ENCODE measurements at regions of chr15 and their contacts with region 1.

Region 1: DNA sequence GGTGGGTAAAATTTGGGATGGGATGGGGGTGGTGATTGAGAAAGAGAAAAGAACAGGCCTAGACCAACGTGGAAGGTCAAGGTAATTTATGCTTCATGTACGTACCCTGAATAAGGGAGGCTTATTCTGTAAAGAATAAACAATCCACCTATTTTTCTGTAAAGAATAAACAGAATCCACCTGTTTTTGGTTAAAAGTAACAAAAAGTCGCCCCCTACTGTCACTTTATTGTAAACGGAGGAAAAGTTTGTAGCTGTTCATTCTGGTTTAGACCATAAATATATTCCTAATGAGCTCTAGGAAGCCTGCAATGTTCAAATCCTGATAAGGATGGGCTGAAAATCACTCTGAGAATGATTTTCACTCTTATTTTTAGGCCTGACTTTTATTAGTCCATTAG is 23.5 kb upstream of the SQOR start:
- DNase-seq: no peak
- ATAC-seq: peak; percentile 43; the same call in 1 of the 3 replicates
- H3K4me3 ChIP-seq: no peak overlapping the region
- H3K27ac ChIP-seq: no peak overlapping the region
- H3K4me1 ChIP-seq: no peaks in the 10 kb centered on the region; the same call in 1 of the 2 replicates
- H3K27me3 ChIP-seq: no peaks in the 10 kb centered on the region
- CTCF ChIP-seq: peak; percentile 42 to 53 (median 46); a peak in 5 of 6 replicates
- EP300 ChIP-seq: no peak
- POLR2A ChIP-seq: no peak
- RAD21 ChIP-seq: peak; percentile 61

Region 2: DNA sequence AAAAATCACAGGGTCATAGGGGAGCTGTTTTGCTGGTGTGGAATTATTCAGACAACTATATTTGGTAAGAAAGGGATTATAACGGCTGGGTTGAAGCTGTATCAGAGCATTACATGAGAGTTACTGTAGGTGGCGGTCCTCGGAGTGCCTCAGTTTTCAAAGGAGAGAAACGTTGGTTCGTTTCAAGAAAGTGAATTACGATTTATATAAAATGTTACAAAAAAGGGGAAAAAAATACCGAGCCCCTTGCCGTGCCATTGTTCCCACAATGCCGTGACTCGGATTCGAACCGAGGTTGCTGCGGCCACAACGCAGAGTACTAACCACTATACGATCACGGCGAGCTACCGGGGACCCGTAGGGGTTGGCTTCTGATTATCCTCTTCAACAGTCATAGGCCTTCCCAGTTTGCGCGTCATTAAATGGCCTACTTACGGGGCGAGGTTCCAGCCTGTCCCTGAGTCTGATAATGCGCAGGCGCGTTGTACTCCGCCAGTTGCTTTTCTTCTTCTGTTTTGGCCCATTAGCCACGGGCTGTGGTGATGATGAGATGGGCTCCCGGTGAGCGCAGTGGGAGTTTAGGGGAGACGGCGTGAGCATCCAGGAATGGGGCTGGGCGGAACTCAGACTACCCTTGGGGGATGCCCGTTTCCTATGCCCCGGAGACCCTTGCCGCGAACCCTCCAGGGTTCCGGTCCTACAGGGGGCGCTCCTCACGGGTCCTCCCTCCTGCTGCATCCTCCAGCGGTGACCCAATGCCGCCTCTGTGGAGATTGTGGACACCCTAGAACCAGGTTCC is 412.8 kb before region 1 on chr15:
- CTCF ChIA-PET with region 1: interaction called, 3 read pairs
- POLR2A ChIA-PET with region 1: interaction called, 6 read pairs
- RAD21 ChIA-PET with region 1: no interaction called
- SMC1A ChIA-PET with region 1: interaction called, 4 read pairs
- in situ Hi-C with region 1: no loop called
- intact Hi-C with region 1: loop called (anchors 10 kb)
- DNase-seq: peak; percentile 98
- ATAC-seq: peak; percentile 63
- H3K4me3 ChIP-seq: peak overlapping the region; percentile 86
- H3K27ac ChIP-seq: peak overlapping the region; percentile 95
- H3K4me1 ChIP-seq: no peaks in the 10 kb centered on the region; the same call in none of the 2 replicates
- H3K27me3 ChIP-seq: no peaks in the 10 kb centered on the region
- CTCF ChIP-seq: peak; percentile 71 to 81 (median 80)
- EP300 ChIP-seq: peak in 1 of 2 experiments; percentile 90; a peak in 1 of 4 replicates
- POLR2A ChIP-seq: peak; percentile 96
- RAD21 ChIP-seq: no peak

Region 3: DNA sequence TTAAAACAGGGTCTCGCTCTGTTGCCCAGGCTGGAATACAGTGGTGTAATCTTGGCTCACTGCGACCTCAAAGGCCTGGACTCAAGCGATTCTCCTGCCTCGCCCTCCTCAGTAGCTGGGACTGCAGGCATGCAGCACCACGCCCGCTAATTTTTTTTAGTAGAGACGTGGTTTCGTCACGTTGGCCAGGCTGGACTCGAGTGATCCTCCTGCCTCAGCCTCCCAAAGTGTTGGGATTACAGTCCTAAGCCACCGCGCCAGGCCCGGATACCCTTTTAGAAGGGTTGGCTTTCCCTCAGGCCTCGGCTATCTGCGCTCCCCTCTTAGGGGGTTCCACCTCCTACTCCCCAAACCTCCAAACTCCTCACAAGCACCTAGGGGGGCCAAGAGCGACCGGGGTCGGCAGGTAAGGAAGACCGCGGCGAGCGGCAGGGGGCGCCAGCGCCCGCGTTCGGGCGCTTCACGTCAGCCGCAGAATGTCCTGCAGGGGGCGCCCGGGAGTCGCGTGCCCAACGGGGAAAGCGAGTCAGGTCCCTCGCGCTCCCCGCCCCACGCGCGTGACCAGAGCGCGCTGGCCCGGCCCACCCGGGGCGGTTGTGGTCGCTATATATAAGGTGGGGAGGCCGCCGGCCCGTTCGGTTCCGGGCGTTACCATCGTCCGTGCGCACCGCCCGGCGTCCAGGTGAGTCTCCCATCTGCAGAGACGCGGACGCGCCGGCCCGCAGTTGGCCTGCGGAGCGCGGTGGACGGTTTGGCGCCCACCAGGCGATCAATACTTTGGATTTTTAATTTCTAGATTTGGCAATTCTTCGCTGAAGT is 181.1 kb before region 1 on chr15:
- CTCF ChIA-PET with region 1: interaction called, 59 read pairs
- POLR2A ChIA-PET with region 1: no interaction called
- RAD21 ChIA-PET with region 1: interaction called, 8 read pairs
- SMC1A ChIA-PET with region 1: interaction called, 10 read pairs
- in situ Hi-C with region 1: no loop called
- intact Hi-C with region 1: no loop called
- DNase-seq: no peak
- ATAC-seq: peak; percentile 98
- H3K4me3 ChIP-seq: peak overlapping the region; percentile 61; the same call in 1 of the 2 replicates
- H3K27ac ChIP-seq: no peak overlapping the region
- H3K4me1 ChIP-seq: 0 out of 2 replicates have a peak, but pooled peaks cover 3% of the 10 kb centered on the region
- H3K27me3 ChIP-seq: no peaks in the 10 kb centered on the region
- CTCF ChIP-seq: peak; percentile 99 to 100 (median 99)
- EP300 ChIP-seq: no peak
- POLR2A ChIP-seq: no peak
- RAD21 ChIP-seq: peak; percentile 79

Region 4: GRCh38 chr15:45522328-45523160 is 88.8 kb before region 1 on chr15 and contains the start of gene SLC30A4:
- CTCF ChIA-PET with region 1: interaction called, 12 read pairs
- POLR2A ChIA-PET with region 1: interaction called, 3 read pairs
- RAD21 ChIA-PET with region 1: interaction called, 5 read pairs
- SMC1A ChIA-PET with region 1: interaction called, 5 read pairs
- in situ Hi-C with region 1: no loop called
- intact Hi-C with region 1: loop called (anchors 2 kb)
- DNase-seq: no peak
- ATAC-seq: peak; percentile 89
- H3K4me3 ChIP-seq: peak within 1 kb of the TSS; percentile 56; the same call in 1 of the 2 replicates
- H3K27ac ChIP-seq: no peak within 1 kb of the TSS
- H3K4me1 ChIP-seq: peaks cover 4% of the 10 kb centered on the region; the same call in 1 of the 2 replicates
- H3K27me3 ChIP-seq: no peaks in the 10 kb centered on the region; a peak in 1 of 4 replicates
- CTCF ChIP-seq: peak in 2 of 3 experiments; percentile 25 to 28; a peak in 3 of 6 replicates
- EP300 ChIP-seq: no peak
- POLR2A ChIP-seq: peak; percentile 41; the same call in 1 of the 2 replicates
- RAD21 ChIP-seq: no peak
- polyA plus RNA-seq, gene SLC30A4: 0.16 to 0.29 TPM

Region 5: DNA sequence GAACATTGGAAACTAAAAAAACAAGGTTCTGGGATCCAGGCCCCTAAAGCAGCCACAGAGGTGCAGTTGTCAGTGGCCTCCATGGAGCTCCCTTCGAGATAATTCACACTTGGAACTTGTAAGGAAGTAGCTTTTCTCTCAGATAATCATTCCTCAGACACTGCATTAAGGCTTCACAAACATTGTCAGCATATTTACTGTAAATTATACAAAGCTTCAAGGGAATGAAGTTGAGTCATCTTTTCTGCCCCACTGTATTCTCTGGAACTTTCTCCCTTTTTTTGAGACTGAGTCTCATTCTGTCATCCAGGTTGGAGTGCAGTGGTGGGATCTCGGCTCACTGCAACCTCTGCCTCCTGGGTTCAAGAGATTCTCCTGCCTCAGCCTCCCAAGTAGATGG is 17.0 kb before region 1 on chr15:
- CTCF ChIA-PET with region 1: interaction called, 79 read pairs
- POLR2A ChIA-PET with region 1: no interaction called
- RAD21 ChIA-PET with region 1: interaction called, 5 read pairs
- SMC1A ChIA-PET with region 1: interaction called, 18 read pairs
- in situ Hi-C with region 1: no loop called
- intact Hi-C with region 1: no loop called
- DNase-seq: no peak
- ATAC-seq: no peak
- H3K4me3 ChIP-seq: no peak overlapping the region
- H3K27ac ChIP-seq: no peak overlapping the region
- H3K4me1 ChIP-seq: no peaks in the 10 kb centered on the region
- H3K27me3 ChIP-seq: no peaks in the 10 kb centered on the region
- CTCF ChIP-seq: no peak
- EP300 ChIP-seq: no peak
- POLR2A ChIP-seq: no peak
- RAD21 ChIP-seq: no peak